BJ (cell line): ENCODE measurements at regions of chr22 and their contacts with region 1.

Region 1: GRCh38 chr22:31107178-31107893 is at the start of gene SELENOM:
- DNase-seq: peak; percentile 89
- H3K4me3 ChIP-seq: peak within 1 kb of the TSS; percentile 85
- H3K27me3 ChIP-seq: no peaks in the 10 kb centered on the region
- CTCF ChIP-seq: peak; percentile 99
- polyA plus RNA-seq, gene SELENOM: 215 and 292 TPM in 2 replicates

Region 2: GRCh38 chr22:31124811-31125465 is 17.6 kb after region 1 on chr22:
- CTCF ChIA-PET with region 1: interaction called, 10 read pairs
- POLR2A ChIA-PET with region 1: no interaction called
- DNase-seq: no peak
- H3K4me3 ChIP-seq: no peak overlapping the region
- H3K27me3 ChIP-seq: no peaks in the 10 kb centered on the region; the same call in 1 of the 2 replicates
- CTCF ChIP-seq: no peak

Region 3: DNA sequence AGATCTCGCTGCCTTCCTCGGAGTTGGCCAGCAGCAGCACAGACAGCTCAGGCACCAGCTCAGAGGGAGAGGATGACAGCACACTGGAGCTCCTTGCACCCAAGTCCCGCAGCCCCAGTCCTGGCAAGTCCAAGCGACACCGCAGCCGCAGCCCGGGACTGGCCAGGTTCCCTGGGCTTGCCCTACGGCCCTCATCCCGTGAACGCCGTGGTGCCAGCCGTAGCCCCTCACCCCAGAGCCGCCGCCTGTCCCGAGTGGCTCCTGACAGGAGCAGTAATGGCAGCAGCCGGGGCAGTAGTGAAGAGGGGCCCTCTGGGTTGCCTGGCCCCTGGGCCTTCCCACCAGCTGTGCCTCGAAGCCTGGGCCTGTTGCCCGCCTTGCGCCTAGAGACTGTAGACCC is 26.6 kb after region 1 on chr22:
- CTCF ChIA-PET with region 1: interaction called, 14 read pairs
- POLR2A ChIA-PET with region 1: no interaction called
- DNase-seq: no peak
- H3K4me3 ChIP-seq: no peak overlapping the region
- H3K27me3 ChIP-seq: peaks cover 4% of the 10 kb centered on the region
- CTCF ChIP-seq: no peak